CD4-positive, alpha-beta memory T cell (primary cell): ENCODE measurements at regions of chr1 and their contacts with region 1.

Region 1: DNA sequence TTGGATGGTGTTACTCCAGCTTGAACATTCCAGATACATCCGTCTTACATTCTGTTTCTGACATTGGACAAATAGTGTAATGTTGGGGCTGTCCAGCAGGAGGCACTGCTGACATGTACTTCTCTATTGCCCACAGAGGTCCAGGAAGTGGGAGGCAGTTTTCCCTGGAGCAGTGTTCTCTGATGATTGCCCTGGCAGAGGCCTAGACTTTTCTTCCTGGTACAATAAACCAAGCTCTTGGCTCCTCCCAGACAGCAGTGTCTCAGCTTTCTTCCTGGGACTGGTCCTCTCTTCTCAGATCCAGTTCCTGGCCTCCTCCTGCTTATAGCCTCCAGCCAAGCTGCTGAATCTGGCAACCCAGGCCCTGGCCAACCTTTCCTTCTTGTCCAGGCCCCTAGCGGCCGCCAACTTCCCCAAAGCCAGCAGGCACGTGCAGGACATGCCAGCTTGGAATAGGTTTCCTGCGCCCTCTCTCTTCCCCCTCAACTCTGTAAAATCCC is 14.9 kb upstream of the IFNLR1 start:
- DNase-seq: peak; percentile 32 to 53 (median 43)
- H3K4me3 ChIP-seq: no peak overlapping the region
- H3K4me3 Mint-ChIP-seq: no peak overlapping the region
- H3K27ac ChIP-seq: no peak overlapping the region
- H3K27ac Mint-ChIP-seq: peak overlapping the region in 3 of 7 donors; percentile 11 to 50 (median 36)
- H3K4me1 ChIP-seq: peaks cover 5% of the 10 kb centered on the region
- H3K4me1 Mint-ChIP-seq: peaks cover 3 to 13% (median 6%) of the 10 kb centered on the region in 4 donors
- H3K27me3 ChIP-seq: no peaks in the 10 kb centered on the region
- H3K27me3 Mint-ChIP-seq: no peaks in the 10 kb centered on the region

Region 2: GRCh38 chr1:23951571-23952095 is 250.4 kb before region 1 on chr1:
- CTCF ChIA-PET with region 1: no interaction called
- POLR2A ChIA-PET with region 1: no interaction called
- intact Hi-C with region 1: no loop called
- DNase-seq: no peak
- H3K4me3 ChIP-seq: no peak overlapping the region
- H3K4me3 Mint-ChIP-seq: no peak overlapping the region
- H3K27ac ChIP-seq: no peak overlapping the region
- H3K27ac Mint-ChIP-seq: no peak overlapping the region
- H3K4me1 ChIP-seq: peaks cover 8% of the 10 kb centered on the region
- H3K4me1 Mint-ChIP-seq: peaks cover 6 to 17% (median 7%) of the 10 kb centered on the region in 4 donors
- H3K27me3 ChIP-seq: no peaks in the 10 kb centered on the region
- H3K27me3 Mint-ChIP-seq: peaks cover under 1 to 6% of the 10 kb centered on the region in 2 donors

Region 3: GRCh38 chr1:24150234-24151174 is 51.5 kb before region 1 on chr1:
- CTCF ChIA-PET with region 1: interaction called, 14 read pairs
- POLR2A ChIA-PET with region 1: interaction called, 4 read pairs
- intact Hi-C with region 1: no loop called
- DNase-seq: peak; percentile 72 to 81 (median 74)
- H3K4me3 ChIP-seq: no peak overlapping the region
- H3K4me3 Mint-ChIP-seq: peak overlapping the region; percentile 39 to 80 (median 68)
- H3K27ac ChIP-seq: no peak overlapping the region
- H3K27ac Mint-ChIP-seq: peak overlapping the region in 2 of 7 donors; percentile 1 to 75
- H3K4me1 ChIP-seq: peaks cover 10% of the 10 kb centered on the region
- H3K4me1 Mint-ChIP-seq: peaks cover 7 to 11% (median 9%) of the 10 kb centered on the region in 4 donors
- H3K27me3 ChIP-seq: no peaks in the 10 kb centered on the region
- H3K27me3 Mint-ChIP-seq: peaks cover 9 to 18% of the 10 kb centered on the region in 2 donors

Region 4: GRCh38 chr1:24321697-24322469 is 119.9 kb after region 1 on chr1:
- CTCF ChIA-PET with region 1: interaction called, 7 read pairs
- POLR2A ChIA-PET with region 1: interaction called, 4 read pairs
- intact Hi-C with region 1: loop called (anchors 10 kb)
- DNase-seq: peak; percentile 56 to 84 (median 68)
- H3K4me3 ChIP-seq: peak overlapping the region; percentile 1 to 42
- H3K4me3 Mint-ChIP-seq: peak overlapping the region; percentile 80 to 92 (median 86)
- H3K27ac ChIP-seq: no peak overlapping the region
- H3K27ac Mint-ChIP-seq: peak overlapping the region; percentile 29 to 91 (median 84)
- H3K4me1 ChIP-seq: peaks cover 45% of the 10 kb centered on the region
- H3K4me1 Mint-ChIP-seq: peaks cover 36 to 65% (median 42%) of the 10 kb centered on the region in 4 donors
- H3K27me3 ChIP-seq: peaks cover 4% of the 10 kb centered on the region
- H3K27me3 Mint-ChIP-seq: peaks cover 19 to 29% of the 10 kb centered on the region in 2 donors

Region 5: GRCh38 chr1:24403806-24404205 is 201.8 kb after region 1 on chr1:
- CTCF ChIA-PET with region 1: interaction called, 20 read pairs
- POLR2A ChIA-PET with region 1: no interaction called
- intact Hi-C with region 1: no loop called
- DNase-seq: no peak
- H3K4me3 ChIP-seq: no peak overlapping the region
- H3K4me3 Mint-ChIP-seq: no peak overlapping the region
- H3K27ac ChIP-seq: no peak overlapping the region
- H3K27ac Mint-ChIP-seq: no peak overlapping the region
- H3K4me1 ChIP-seq: no peaks in the 10 kb centered on the region
- H3K4me1 Mint-ChIP-seq: no peaks in the 10 kb centered on the region
- H3K27me3 ChIP-seq: no peaks in the 10 kb centered on the region
- H3K27me3 Mint-ChIP-seq: no peaks in the 10 kb centered on the region

Region 6: GRCh38 chr1:24635195-24635843 is 433.3 kb after region 1 on chr1:
- CTCF ChIA-PET with region 1: interaction called, 49 read pairs
- POLR2A ChIA-PET with region 1: no interaction called
- intact Hi-C with region 1: loop called (anchors 1 kb)
- DNase-seq: peak in 4 of 5 donors; percentile 55 to 63 (median 57)
- H3K4me3 ChIP-seq: no peak overlapping the region
- H3K4me3 Mint-ChIP-seq: no peak overlapping the region
- H3K27ac ChIP-seq: no peak overlapping the region
- H3K27ac Mint-ChIP-seq: no peak overlapping the region
- H3K4me1 ChIP-seq: no peaks in the 10 kb centered on the region
- H3K4me1 Mint-ChIP-seq: peaks cover 2 to 11% (median 3%) of the 10 kb centered on the region in 4 donors
- H3K27me3 ChIP-seq: no peaks in the 10 kb centered on the region
- H3K27me3 Mint-ChIP-seq: peaks cover 2 to 5% of the 10 kb centered on the region in 2 donors

Region 7: DNA sequence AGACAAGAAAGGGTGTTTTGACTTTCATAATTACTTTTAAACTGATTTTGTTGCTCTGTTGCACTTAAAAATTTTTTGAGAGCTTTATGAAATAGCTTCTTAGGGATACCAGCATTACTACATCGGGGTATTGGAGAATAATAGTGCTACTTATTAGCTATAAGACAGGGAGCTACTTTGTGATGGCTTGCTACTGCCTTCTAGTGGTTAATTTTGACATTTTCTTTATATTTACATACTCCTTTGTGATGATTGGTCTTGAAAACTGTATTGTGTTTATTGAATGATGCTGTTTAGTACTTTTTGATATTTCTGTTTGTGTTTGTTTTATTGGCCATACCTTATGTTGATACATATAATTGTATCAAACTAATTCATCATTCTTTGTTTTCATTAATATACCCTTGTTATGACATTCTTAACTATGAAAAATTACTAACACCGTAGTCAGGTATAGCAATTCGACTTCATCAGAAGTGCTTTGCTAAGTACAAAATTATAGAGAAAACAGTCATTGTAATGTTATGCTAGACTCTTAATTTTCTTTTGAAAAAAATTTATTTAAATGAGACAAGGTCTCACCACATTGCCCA is 628.8 kb after region 1 on chr1:
- CTCF ChIA-PET with region 1: interaction called, 20 read pairs
- POLR2A ChIA-PET with region 1: no interaction called
- intact Hi-C with region 1: loop called (anchors 2 kb)
- DNase-seq: peak in 4 of 5 donors; percentile 48 to 54 (median 52)
- H3K4me3 ChIP-seq: no peak overlapping the region
- H3K4me3 Mint-ChIP-seq: no peak overlapping the region
- H3K27ac ChIP-seq: no peak overlapping the region
- H3K27ac Mint-ChIP-seq: no peak overlapping the region
- H3K4me1 ChIP-seq: no peaks in the 10 kb centered on the region
- H3K4me1 Mint-ChIP-seq: no peaks in the 10 kb centered on the region
- H3K27me3 ChIP-seq: no peaks in the 10 kb centered on the region
- H3K27me3 Mint-ChIP-seq: peaks cover 5 to 7% of the 10 kb centered on the region in 2 donors